CD4-positive, alpha-beta memory T cell (primary cell): ENCODE measurements at regions of chr6 and their contacts with region 1.

Region 1: GRCh38 chr6:16286148-16286522 is 47.7 kb downstream of the GMPR start:
- DNase-seq: peak in 2 of 5 donors; percentile 4 to 5
- H3K4me3 ChIP-seq: no peak overlapping the region
- H3K4me3 Mint-ChIP-seq: no peak overlapping the region
- H3K27ac ChIP-seq: no peak overlapping the region
- H3K27ac Mint-ChIP-seq: no peak overlapping the region
- H3K4me1 ChIP-seq: no peaks in the 10 kb centered on the region
- H3K4me1 Mint-ChIP-seq: no peaks in the 10 kb centered on the region
- H3K27me3 ChIP-seq: no peaks in the 10 kb centered on the region
- H3K27me3 Mint-ChIP-seq: peaks cover 3 to 7% of the 10 kb centered on the region in 2 donors

Region 2: DNA sequence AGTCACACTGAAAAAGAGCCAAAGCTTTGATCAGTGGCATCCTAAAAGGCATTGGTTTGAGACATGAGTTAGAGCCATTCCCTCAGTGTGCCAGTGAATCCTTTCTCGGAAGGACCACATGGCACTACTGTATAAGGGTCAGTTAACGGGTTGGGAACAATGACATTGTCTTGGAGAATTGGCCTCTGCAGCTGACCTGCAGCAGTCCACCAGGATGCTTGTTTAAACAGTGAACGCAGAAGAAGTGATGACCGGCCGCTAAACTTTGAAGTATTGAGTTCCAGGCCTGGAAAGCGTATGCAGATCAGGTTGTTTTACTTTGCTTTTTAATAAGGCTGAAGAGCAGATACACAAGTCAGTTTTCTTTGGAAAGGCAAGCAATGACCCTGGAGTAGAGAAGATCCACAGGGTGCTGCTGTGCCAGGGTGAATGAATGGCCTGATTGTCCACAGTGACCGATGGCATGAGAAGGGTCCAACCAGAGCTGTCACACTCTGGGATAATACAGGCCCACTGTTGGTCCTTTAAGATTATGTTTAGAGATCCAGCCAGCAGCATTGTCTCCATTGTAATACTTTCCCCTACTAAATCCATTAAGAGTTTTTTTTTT is 10.0 kb after region 1 on chr6:
- CTCF ChIA-PET with region 1: interaction called, 11 read pairs
- POLR2A ChIA-PET with region 1: no interaction called
- intact Hi-C with region 1: no loop called
- DNase-seq: no peak
- H3K4me3 ChIP-seq: no peak overlapping the region
- H3K4me3 Mint-ChIP-seq: peak overlapping the region in 1 of 8 donors; percentile 2
- H3K27ac ChIP-seq: no peak overlapping the region
- H3K27ac Mint-ChIP-seq: no peak overlapping the region
- H3K4me1 ChIP-seq: no peaks in the 10 kb centered on the region
- H3K4me1 Mint-ChIP-seq: peaks cover 0 to 4% (median 0%) of the 10 kb centered on the region in 4 donors
- H3K27me3 ChIP-seq: no peaks in the 10 kb centered on the region
- H3K27me3 Mint-ChIP-seq: no peaks in the 10 kb centered on the region